Ascending aorta (tissue), 2 donors: ENCODE measurements at regions of chr1 and their contacts with region 1.

Region 1: GRCh38 chr1:39625462-39626273 is 13.8 kb downstream of the HEYL start:
- DNase-seq: peak; percentile 88 to 97
- H3K4me3 ChIP-seq: peak overlapping the region in 1 of 2 donors; percentile 34
- H3K27ac ChIP-seq: peak overlapping the region; percentile 98
- H3K4me1 ChIP-seq: peaks cover 33 to 50% of the 10 kb centered on the region in 2 donors
- H3K27me3 ChIP-seq: no peaks in the 10 kb centered on the region
- CTCF ChIP-seq: no peak

Region 2: GRCh38 chr1:39639305-39640130 is 13.8 kb after region 1 on chr1 and contains the start of gene HEYL:
- intact Hi-C with region 1: loop called (anchors 1 kb)
- DNase-seq: peak in 1 of 2 donors; percentile 88
- H3K4me3 ChIP-seq: peak within 1 kb of the TSS; percentile 76 to 83
- H3K27ac ChIP-seq: peak within 1 kb of the TSS; percentile 96 to 98
- H3K4me1 ChIP-seq: peaks cover 3 to 19% of the 10 kb centered on the region in 2 donors
- H3K27me3 ChIP-seq: no peaks in the 10 kb centered on the region
- CTCF ChIP-seq: peak; percentile 73 to 77 (median 76)
- total RNA-seq, gene HEYL: 34.0 TPM